MCF 10A (cell line): ENCODE measurements at regions of chr10 and their contacts with region 1.

Region 1: DNA sequence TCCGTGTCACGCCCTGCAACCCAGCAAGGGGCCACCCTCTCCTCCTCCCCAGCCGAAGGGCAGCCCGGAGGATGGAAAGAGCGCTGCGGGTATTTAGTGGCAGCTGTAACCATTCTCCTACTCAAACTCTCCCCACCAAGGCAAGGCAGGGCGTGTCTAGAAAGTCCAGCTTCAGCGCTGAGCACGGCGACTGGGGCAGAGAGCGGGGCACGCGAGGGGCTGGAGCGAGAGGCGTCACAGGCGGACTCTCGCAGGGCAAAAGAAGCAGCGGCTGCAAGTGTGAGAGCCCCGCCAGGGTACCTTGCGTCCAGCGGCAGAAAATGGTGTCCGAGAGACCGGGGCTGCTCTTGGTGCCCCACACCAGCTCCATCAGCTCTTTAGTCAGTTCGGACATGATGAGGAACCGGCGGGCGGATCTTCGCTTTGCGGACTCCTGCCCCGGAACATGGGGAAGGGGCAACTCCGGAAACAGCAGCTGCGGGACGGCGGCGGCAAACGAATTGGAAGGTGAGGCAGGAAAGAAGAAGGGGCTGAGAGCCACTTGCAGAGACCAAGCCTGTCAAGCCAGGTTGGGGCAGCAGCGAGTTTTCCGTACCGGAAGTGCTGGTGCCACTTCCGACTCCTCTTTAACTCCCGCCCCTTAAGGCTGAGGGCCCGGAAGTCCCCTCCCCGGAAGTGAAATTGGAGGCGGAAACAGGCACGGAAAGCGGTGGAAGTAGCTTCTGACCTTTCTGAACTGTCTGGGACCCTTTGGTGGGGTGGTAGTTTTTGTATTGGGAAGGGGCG is at the start of gene MINDY3:
- DNase-seq: peak; percentile 82
- H3K4me3 Mint-ChIP-seq: peak within 1 kb of the TSS; percentile 97
- H3K27ac Mint-ChIP-seq: peak within 1 kb of the TSS; percentile 89
- H3K4me1 Mint-ChIP-seq: peaks cover 20% of the 10 kb centered on the region
- H3K27me3 Mint-ChIP-seq: peaks cover 21% of the 10 kb centered on the region
- CTCF ChIP-seq: no peak
- total RNA-seq, gene MINDY3: 28.8 and 31.7 TPM in 2 replicates

Region 2: DNA sequence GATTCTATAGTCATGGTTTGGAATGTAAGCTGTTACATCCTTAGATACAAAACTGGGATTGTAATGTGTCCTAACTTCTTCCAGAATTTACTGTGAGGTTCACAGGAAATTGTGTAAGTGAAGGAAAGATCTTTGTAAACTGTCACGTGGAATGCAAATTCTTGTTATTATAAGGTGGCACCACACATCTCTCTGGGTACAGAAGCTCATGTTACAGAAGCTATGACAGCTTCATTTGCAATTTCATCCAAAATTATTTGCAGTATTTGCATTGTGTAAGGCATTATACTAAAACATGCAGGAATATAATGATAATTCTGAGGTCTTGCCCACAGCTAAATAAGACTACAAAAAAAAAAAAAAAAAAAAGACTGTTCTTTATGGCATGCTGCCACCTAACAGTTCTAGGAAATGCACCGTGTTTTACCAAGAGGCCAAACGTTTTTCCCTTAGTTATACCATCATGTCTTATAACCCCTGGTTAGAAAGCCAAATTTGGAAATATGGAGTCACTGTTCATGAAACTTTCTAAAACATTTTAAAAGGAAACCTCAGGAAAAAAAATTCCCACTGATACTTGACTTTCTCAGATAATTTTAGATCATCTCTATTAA is 17.4 kb before region 1 on chr10:
- CTCF ChIA-PET with region 1: interaction called, 3 read pairs
- POLR2A ChIA-PET with region 1: interaction called, 11 read pairs
- intact Hi-C with region 1: no loop called
- DNase-seq: peak; percentile 50
- H3K4me3 Mint-ChIP-seq: no peak overlapping the region
- H3K27ac Mint-ChIP-seq: peak overlapping the region; percentile 35
- H3K4me1 Mint-ChIP-seq: peaks cover 8% of the 10 kb centered on the region
- H3K27me3 Mint-ChIP-seq: no peaks in the 10 kb centered on the region
- CTCF ChIP-seq: no peak

Region 3: GRCh38 chr10:16436758-16437539 is 576.9 kb after region 1 on chr10 and contains the start of gene PTER:
- CTCF ChIA-PET with region 1: no interaction called
- POLR2A ChIA-PET with region 1: no interaction called
- intact Hi-C with region 1: loop called (anchors 2 kb)
- DNase-seq: peak; percentile 98
- H3K4me3 Mint-ChIP-seq: peak within 1 kb of the TSS; percentile 91
- H3K27ac Mint-ChIP-seq: peak within 1 kb of the TSS; percentile 94
- H3K4me1 Mint-ChIP-seq: peaks cover 29% of the 10 kb centered on the region
- H3K27me3 Mint-ChIP-seq: no peaks in the 10 kb centered on the region
- CTCF ChIP-seq: no peak
- total RNA-seq, gene PTER: 50.8 and 53.2 TPM in 2 replicates

Region 4: GRCh38 chr10:16817125-16818019 is 957.3 kb after region 1 on chr10 and contains the start of gene RSU1:
- CTCF ChIA-PET with region 1: no interaction called
- POLR2A ChIA-PET with region 1: interaction called, 11 read pairs
- intact Hi-C with region 1: no loop called
- DNase-seq: peak; percentile 100
- H3K4me3 Mint-ChIP-seq: peak within 1 kb of the TSS; percentile 94
- H3K27ac Mint-ChIP-seq: peak within 1 kb of the TSS; percentile 74
- H3K4me1 Mint-ChIP-seq: peaks cover 17% of the 10 kb centered on the region
- H3K27me3 Mint-ChIP-seq: no peaks in the 10 kb centered on the region
- CTCF ChIP-seq: no peak
- total RNA-seq, gene RSU1: 50.5 and 54.4 TPM in 2 replicates

Region 5: DNA sequence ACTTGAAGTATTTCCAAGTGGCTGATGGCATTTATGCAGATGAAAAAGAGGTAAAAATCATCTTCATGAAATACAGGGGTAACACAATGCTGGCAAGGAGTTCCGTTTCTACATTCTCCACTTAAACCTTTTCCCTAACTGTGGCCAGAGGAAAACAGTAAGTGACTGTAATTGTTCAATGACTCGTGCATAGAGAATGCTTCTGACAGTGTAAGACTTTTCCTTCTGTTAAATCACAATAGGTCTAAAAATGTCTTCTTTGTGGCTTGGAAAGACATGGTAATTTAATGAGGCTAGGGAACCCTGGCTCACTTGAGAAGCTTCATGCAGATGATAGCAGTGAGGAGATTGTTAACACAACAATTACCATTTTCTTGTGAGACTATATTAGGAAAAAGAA is 1007.5 kb after region 1 on chr10:
- CTCF ChIA-PET with region 1: no interaction called
- POLR2A ChIA-PET with region 1: no interaction called
- intact Hi-C with region 1: no loop called
- DNase-seq: no peak
- H3K4me3 Mint-ChIP-seq: no peak overlapping the region
- H3K27ac Mint-ChIP-seq: no peak overlapping the region
- H3K4me1 Mint-ChIP-seq: no peaks in the 10 kb centered on the region
- H3K27me3 Mint-ChIP-seq: no peaks in the 10 kb centered on the region
- CTCF ChIP-seq: no peak